K562 (cell line): ENCODE measurements at regions of chr3 and their contacts with region 1.

Region 1: GRCh38 chr3:150508401-150508800 is 37.9 kb downstream of the SERP1 start:
- DNase-seq: no peak
- ATAC-seq: no peak
- H3K4me3 ChIP-seq: no peak overlapping the region
- H3K27ac ChIP-seq: no peak overlapping the region
- H3K4me1 ChIP-seq: no peaks in the 10 kb centered on the region
- H3K27me3 ChIP-seq: peaks cover 0 to 10% of the 10 kb centered on the region in 2 experiments; a peak in 1 of 5 replicates
- CTCF ChIP-seq: no peak
- EP300 ChIP-seq: no peak
- POLR2A ChIP-seq: no peak
- RAD21 ChIP-seq: no peak

Region 2: DNA sequence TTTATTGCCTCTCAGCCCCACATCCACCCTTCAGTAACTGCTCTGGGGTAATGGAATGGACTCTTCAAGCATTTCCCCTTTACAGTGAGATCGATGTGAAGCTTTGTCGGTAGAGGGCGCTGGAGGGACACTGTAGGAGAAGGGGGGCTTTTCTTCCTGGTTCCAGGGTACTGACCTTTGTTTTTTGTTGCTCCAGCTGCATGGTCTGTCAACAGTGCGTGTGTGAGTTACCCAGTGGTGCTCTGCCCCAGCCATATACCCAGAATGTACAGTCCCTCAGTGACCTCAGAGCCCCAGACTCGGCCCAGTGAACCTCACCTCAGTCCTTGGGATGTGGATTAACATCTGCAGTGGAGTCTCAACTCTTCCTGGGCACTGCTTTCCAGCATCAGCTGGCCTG is 280.6 kb before region 1 on chr3:
- CTCF ChIA-PET with region 1: no interaction called
- POLR2A ChIA-PET with region 1: no interaction called
- in situ Hi-C with region 1: loop called (anchors 5 kb)
- intact Hi-C with region 1: no loop called
- DNase-seq: peak; percentile 58 to 78 (median 60)
- ATAC-seq: peak; percentile 94
- H3K4me3 ChIP-seq: no peak overlapping the region
- H3K27ac ChIP-seq: no peak overlapping the region
- H3K4me1 ChIP-seq: no peaks in the 10 kb centered on the region
- H3K27me3 ChIP-seq: peaks cover 7 to 24% of the 10 kb centered on the region in 2 experiments
- CTCF ChIP-seq: peak; percentile 77 to 86 (median 82)
- EP300 ChIP-seq: no peak
- POLR2A ChIP-seq: no peak
- RAD21 ChIP-seq: peak; percentile 60 to 85

Region 3: DNA sequence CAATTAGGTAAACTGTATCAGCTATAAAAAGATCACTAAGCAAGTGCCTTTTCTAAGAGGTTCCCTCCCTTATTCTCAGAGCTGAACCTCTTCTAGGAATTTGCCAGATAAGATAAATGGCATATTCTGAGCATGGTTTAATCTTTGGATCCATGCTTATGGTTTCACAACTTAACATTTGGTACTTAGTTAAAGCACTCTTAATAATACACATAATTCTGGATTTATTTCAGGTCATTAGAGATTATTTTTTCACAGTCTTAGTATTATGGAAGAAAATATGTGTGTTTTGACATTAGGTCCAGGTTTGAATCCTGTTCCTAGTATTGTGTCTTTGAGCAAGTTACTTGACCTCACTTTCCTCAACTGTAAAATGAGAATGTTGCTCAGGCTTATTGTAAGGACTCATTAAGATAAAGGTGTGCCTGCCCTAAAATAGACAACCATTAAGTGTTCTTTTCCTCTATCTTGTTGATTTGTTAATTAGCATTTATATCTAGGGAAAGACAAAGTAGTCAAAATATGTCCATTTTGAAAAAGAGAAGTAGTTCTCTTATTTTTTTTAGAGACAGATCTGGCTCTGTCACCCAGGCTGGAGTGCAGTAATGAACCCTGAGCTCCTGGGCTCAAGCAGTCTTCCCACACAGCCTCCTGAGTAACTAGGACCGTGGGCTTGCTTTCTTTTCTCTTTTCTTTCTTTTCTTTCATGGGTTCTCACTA is 56.9 kb before region 1 on chr3:
- CTCF ChIA-PET with region 1: no interaction called
- POLR2A ChIA-PET with region 1: no interaction called
- in situ Hi-C with region 1: no loop called
- intact Hi-C with region 1: no loop called
- DNase-seq: peak; percentile 33 to 83 (median 50)
- ATAC-seq: peak; percentile 72
- H3K4me3 ChIP-seq: peak overlapping the region; percentile 5; the same call in 1 of the 2 replicates
- H3K27ac ChIP-seq: peak overlapping the region; percentile 85
- H3K4me1 ChIP-seq: peaks cover 26 to 53% of the 10 kb centered on the region in 2 experiments
- H3K27me3 ChIP-seq: no peaks in the 10 kb centered on the region
- CTCF ChIP-seq: no peak
- EP300 ChIP-seq: peak; percentile 97
- POLR2A ChIP-seq: no peak
- RAD21 ChIP-seq: peak in 1 of 2 experiments; percentile 14; a peak in 1 of 4 replicates